ENCODE measurements at regions of chr1 and their contacts with region 1.

Region 1: DNA sequence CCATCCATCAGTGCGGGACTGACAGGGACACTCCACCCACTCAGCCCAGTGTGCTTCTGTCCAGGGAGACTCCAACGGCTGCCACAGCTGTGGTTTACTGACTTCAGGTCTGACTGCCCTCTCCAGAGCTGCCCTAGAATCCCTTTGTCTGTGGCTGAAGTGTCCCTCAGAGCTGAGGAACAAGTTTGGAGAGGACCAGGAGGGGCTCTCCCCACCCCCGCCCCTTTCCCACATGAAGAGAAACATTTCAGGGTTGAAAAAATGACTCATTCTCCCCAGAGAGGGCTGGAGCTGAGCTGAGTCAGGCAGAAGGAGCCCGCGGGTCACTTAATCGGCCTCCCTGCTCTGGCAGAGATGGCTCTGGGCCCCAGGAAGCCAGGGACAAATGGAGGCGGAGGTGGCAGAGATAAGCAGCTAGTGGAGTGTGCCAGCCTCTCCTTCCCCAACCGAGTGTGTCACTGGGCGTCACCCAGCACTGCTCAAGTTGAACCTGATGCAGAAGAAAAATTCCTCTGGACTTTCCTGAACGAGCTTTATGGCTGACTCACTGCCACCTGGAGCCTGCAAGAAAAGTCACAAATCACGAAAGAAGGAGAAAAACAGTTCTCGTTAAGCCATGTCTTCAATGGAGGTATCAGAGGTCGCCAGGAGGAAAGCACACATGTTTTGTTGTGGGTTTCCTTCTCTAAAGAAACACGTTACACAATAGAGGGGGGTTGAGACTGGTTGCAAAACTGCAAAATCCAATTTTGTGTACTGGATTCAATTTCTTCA is 34.3 kb upstream of the ECE1 start:
- DNase-seq: peak; percentile 92
- H3K4me3 Mint-ChIP-seq: peak overlapping the region; percentile 28
- H3K27ac Mint-ChIP-seq: peak overlapping the region; percentile 90
- H3K4me1 Mint-ChIP-seq: peaks cover 57% of the 10 kb centered on the region
- H3K27me3 Mint-ChIP-seq: no peaks in the 10 kb centered on the region
- CTCF ChIP-seq: no peak

Region 2: DNA sequence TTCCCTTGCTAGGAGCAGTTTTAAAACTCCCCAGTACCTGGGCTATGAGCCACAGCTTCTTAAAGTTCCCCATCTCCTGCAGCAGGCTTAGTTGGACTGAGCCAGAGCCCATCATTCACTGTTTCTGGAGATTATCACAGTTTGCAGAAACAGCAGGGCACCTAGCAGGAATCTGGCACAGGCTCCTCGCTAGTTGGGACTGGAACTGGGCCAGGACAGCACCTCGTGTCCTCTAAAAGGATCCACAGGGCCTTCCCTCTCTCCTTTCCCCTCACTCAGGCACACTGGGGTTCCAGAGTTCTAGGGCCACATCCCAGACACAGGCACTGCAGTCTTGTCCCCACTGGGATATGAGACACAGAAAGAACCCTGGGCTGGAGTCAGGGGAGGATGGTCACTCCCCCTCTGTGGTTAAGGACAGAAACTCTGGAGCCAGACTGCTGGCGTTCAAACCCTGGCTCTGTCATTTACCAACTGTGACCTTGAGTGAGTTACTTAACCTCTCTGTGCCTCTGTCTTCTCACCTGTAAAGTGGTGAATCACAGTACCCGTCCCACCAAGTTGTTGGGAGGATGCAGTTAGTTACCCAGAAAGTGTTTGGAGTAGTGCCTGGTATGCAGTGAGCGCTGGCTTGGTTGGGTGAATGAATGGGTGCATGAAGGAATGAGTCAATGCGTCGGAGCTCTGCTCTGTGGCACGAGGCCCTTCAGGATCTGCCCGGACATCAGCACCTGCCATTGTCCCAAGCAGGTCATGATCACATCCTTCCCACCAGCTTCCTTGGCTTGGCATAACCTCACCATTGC is 15.5 kb before region 1 on chr1:
- CTCF ChIA-PET with region 1: interaction called, 9 read pairs
- POLR2A ChIA-PET with region 1: interaction called, 33 read pairs
- intact Hi-C with region 1: no loop called
- DNase-seq: peak; percentile 79
- H3K4me3 Mint-ChIP-seq: no peak overlapping the region
- H3K27ac Mint-ChIP-seq: peak overlapping the region; percentile 46
- H3K4me1 Mint-ChIP-seq: peaks cover 17% of the 10 kb centered on the region
- H3K27me3 Mint-ChIP-seq: no peaks in the 10 kb centered on the region
- CTCF ChIP-seq: no peak

Region 3: GRCh38 chr1:21344750-21345443 is 20.3 kb after region 1 on chr1:
- CTCF ChIA-PET with region 1: no interaction called
- POLR2A ChIA-PET with region 1: interaction called, 17 read pairs
- intact Hi-C with region 1: no loop called
- DNase-seq: no peak
- H3K4me3 Mint-ChIP-seq: no peak overlapping the region
- H3K27ac Mint-ChIP-seq: no peak overlapping the region
- H3K4me1 Mint-ChIP-seq: peaks cover 6% of the 10 kb centered on the region
- H3K27me3 Mint-ChIP-seq: no peaks in the 10 kb centered on the region
- CTCF ChIP-seq: no peak